Calu3 (cell line): ENCODE measurements at regions of chr6 and their contacts with region 1.

Region 1: GRCh38 chr6:68975064-68975463 is 340.0 kb downstream of the ADGRB3 start:
- DNase-seq: peak; percentile 47
- H3K4me3 Mint-ChIP-seq: no peak overlapping the region
- H3K27ac Mint-ChIP-seq: no peak overlapping the region
- H3K4me1 Mint-ChIP-seq: peaks cover 2% of the 10 kb centered on the region
- H3K27me3 Mint-ChIP-seq: no peaks in the 10 kb centered on the region
- CTCF ChIP-seq: no peak

Region 2: DNA sequence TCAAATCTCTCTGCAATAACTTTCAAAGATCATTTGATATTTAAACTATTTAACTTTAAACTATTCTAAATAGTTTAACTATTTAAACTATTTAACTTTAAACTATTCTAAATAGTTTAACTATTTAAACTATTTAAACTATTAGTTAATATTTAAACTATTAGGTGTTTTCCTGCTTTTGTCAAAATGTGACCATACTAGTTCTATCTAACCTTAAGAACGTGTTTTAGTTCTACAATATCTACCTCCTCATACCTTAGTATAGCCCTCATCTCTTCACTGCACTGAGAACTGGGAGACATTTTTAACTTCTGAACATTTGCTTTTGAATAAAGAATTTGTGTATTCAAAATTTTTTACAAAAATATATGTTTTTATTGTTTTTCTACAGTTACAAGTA is 89.2 kb after region 1 on chr6:
- CTCF ChIA-PET with region 1: no interaction called
- intact Hi-C with region 1: loop called (anchors 1 kb)
- DNase-seq: no peak
- H3K4me3 Mint-ChIP-seq: no peak overlapping the region
- H3K27ac Mint-ChIP-seq: peak overlapping the region; percentile 39
- H3K4me1 Mint-ChIP-seq: no peaks in the 10 kb centered on the region
- H3K27me3 Mint-ChIP-seq: no peaks in the 10 kb centered on the region
- CTCF ChIP-seq: no peak

Region 3: GRCh38 chr6:69105288-69105687 is 130.2 kb after region 1 on chr6:
- CTCF ChIA-PET with region 1: interaction called, 28 read pairs
- intact Hi-C with region 1: loop called (anchors 1 kb)
- DNase-seq: peak; percentile 39
- H3K4me3 Mint-ChIP-seq: no peak overlapping the region
- H3K27ac Mint-ChIP-seq: no peak overlapping the region
- H3K4me1 Mint-ChIP-seq: peaks cover 10% of the 10 kb centered on the region
- H3K27me3 Mint-ChIP-seq: no peaks in the 10 kb centered on the region
- CTCF ChIP-seq: no peak

Region 4: GRCh38 chr6:69155467-69155866 is 180.4 kb after region 1 on chr6:
- CTCF ChIA-PET with region 1: no interaction called
- intact Hi-C with region 1: loop called (anchors 1 kb)
- DNase-seq: no peak
- H3K4me3 Mint-ChIP-seq: no peak overlapping the region
- H3K27ac Mint-ChIP-seq: no peak overlapping the region
- H3K4me1 Mint-ChIP-seq: peaks cover 9% of the 10 kb centered on the region
- H3K27me3 Mint-ChIP-seq: no peaks in the 10 kb centered on the region
- CTCF ChIP-seq: no peak

Region 5: GRCh38 chr6:69696273-69696672 is 721.2 kb after region 1 on chr6:
- CTCF ChIA-PET with region 1: no interaction called
- intact Hi-C with region 1: loop called (anchors 10 kb)
- DNase-seq: no peak
- H3K4me3 Mint-ChIP-seq: no peak overlapping the region
- H3K27ac Mint-ChIP-seq: no peak overlapping the region
- H3K4me1 Mint-ChIP-seq: no peaks in the 10 kb centered on the region
- H3K27me3 Mint-ChIP-seq: no peaks in the 10 kb centered on the region
- CTCF ChIP-seq: no peak